Activated CD4-positive, alpha-beta memory T cell treated with anti-CD3 and anti-CD28 coated beads for 36 hours (primary cell): ENCODE measurements at regions of chr4 and their contacts with region 1.

Region 1: DNA sequence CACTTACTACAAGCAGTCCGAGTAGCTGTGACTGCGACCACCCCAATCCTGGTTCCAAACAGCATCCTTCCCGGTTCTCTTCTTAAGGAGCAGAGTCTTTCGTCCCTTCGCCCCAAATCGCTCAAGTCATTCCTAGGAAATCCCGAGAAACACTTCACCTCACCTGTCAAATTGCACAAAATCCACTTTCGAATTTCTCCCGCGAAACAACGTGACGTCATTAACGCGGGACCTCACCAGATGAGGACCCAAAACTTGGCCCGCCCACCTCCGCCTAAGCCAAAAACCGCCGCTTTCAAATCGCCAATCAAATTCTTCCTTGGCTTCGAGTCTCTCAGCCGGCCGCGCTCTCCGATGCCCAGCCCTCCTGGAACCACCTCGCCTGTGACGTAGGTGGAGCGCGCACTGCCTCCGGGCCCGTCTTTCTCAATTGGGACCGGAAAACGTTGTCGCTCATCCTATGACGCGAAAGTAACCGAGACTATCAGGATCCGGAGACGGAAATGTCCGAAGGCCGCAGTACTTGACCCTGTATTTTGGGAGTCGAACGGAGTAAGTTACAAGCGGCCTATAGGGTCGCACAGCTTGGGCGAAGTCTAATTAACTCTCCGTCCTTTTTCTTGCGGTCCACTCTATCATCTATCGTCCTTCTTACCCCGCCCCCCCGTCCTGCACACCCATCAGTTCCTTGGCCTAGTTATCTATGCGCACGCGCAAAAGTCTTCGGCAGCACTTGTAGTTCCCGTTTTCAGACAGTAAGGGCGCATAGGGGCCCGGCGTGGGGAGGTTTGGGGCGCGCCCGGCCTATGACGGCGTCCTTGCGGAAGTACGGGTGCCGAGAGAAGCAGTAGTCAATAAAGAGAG is at the starts of genes LARP7 and ZGRF1:
- DNase-seq: peak; percentile 99
- H3K4me3 Mint-ChIP-seq: no peak within 1 kb of the TSS
- H3K27ac Mint-ChIP-seq: no peak within 1 kb of the TSS
- H3K4me1 Mint-ChIP-seq: peaks cover 33% of the 10 kb centered on the region
- H3K27me3 Mint-ChIP-seq: no peaks in the 10 kb centered on the region
- total RNA-seq, gene LARP7: 40.9 to 41.3 TPM
- total RNA-seq, gene ZGRF1: 32.9 to 36.6 TPM

Region 2: GRCh38 chr4:112145326-112145819 is 491.5 kb before region 1 on chr4 and contains the start of gene FAM241A:
- CTCF ChIA-PET with region 1: no interaction called
- POLR2A ChIA-PET with region 1: no interaction called
- intact Hi-C with region 1: loop called (anchors 1 kb)
- DNase-seq: peak; percentile 92
- H3K4me3 Mint-ChIP-seq: peak within 1 kb of the TSS; percentile 87
- H3K27ac Mint-ChIP-seq: peak within 1 kb of the TSS; percentile 84
- H3K4me1 Mint-ChIP-seq: peaks cover 42% of the 10 kb centered on the region
- H3K27me3 Mint-ChIP-seq: no peaks in the 10 kb centered on the region
- total RNA-seq, gene FAM241A: 3.1 to 3.5 TPM

Region 3: GRCh38 chr4:112270640-112271393 is 366.1 kb before region 1 on chr4:
- CTCF ChIA-PET with region 1: interaction called, 4 read pairs
- POLR2A ChIA-PET with region 1: no interaction called
- intact Hi-C with region 1: loop called (anchors 5 kb)
- DNase-seq: no peak
- H3K4me3 Mint-ChIP-seq: no peak overlapping the region
- H3K27ac Mint-ChIP-seq: peak overlapping the region; percentile 77
- H3K4me1 Mint-ChIP-seq: peaks cover 60% of the 10 kb centered on the region
- H3K27me3 Mint-ChIP-seq: no peaks in the 10 kb centered on the region

Region 4: DNA sequence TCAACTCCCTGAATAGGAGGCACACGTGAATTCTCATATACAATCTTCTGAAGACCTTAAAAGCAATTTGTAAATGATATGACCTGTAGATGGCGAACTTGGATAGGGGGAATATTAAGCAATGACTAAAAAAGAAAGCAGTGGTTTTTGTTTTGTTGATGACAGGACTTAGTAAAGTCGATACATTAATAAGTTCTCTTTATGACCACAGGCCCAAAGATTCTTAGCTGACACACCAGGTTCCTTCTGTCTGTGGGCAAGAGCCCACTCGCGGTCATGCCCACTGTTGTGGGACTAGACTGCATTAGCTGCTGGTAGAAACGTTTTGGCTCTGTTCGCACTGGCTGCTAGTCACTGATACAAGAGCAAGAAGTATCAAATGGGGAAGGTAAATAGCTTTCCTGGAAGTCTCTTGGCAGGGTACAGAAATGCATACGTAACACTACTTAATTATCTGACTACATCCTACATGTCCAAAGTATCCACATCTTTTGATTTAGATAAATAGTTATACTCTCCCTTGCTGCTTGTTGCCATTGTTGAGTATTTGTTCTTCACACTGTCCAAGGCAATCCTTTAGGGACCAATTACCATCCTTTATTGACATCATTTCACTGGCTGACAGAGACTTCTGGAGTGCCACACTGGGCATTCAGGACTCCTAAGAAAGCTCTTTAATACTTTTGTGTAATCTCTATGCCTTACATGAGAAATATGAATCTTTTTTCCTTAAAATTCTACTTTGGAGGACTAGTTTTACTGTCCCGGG is 308.8 kb before region 1 on chr4:
- CTCF ChIA-PET with region 1: interaction called, 6 read pairs
- POLR2A ChIA-PET with region 1: no interaction called
- intact Hi-C with region 1: loop called (anchors 10 kb)
- DNase-seq: peak; percentile 24
- H3K4me3 Mint-ChIP-seq: no peak overlapping the region
- H3K27ac Mint-ChIP-seq: no peak overlapping the region
- H3K4me1 Mint-ChIP-seq: peaks cover 5% of the 10 kb centered on the region
- H3K27me3 Mint-ChIP-seq: no peaks in the 10 kb centered on the region

Region 5: DNA sequence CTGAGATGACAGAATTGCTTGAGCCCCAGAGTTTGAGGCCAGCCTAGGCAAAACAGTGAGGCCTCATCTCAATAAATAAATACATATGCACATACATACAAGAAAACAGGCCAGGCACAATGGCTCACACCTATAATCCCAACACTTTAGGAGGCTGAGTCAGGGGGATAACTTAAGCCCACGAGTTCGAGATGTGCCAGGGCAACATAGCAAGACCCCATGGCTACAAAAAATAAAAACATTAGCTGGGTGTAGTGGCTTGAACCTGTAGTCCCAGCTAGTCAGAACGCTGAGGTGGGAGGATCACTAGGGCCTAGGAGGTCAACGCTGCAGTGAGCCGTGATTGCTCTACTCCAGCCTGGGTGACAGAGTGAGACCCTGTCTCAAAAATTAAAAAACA is 69.4 kb before region 1 on chr4:
- CTCF ChIA-PET with region 1: no interaction called
- POLR2A ChIA-PET with region 1: no interaction called
- intact Hi-C with region 1: no loop called
- DNase-seq: no peak
- H3K4me3 Mint-ChIP-seq: no peak overlapping the region
- H3K27ac Mint-ChIP-seq: no peak overlapping the region
- H3K4me1 Mint-ChIP-seq: no peaks in the 10 kb centered on the region
- H3K27me3 Mint-ChIP-seq: no peaks in the 10 kb centered on the region

Region 6: DNA sequence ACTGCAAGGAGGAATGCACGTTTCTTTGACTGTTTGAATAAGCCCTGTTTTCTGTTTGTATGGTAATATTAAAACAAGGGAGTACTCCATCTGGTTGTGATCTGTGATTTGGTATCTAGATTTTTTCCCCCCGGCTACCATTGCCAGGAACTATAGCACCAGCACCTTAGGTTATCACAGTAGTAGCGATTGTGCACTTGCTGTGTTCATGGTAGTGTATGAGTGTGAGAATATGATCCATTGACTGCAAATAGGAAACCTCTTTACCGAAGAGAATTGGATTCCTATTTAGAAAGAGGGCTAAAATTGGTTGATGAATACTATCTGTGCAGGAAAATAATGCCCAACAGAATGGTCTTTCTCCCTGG is 69.9 kb after region 1 on chr4:
- CTCF ChIA-PET with region 1: no interaction called
- POLR2A ChIA-PET with region 1: no interaction called
- intact Hi-C with region 1: loop called (anchors 2 kb)
- DNase-seq: no peak
- H3K4me3 Mint-ChIP-seq: peak overlapping the region; percentile 81
- H3K27ac Mint-ChIP-seq: no peak overlapping the region
- H3K4me1 Mint-ChIP-seq: peaks cover 21% of the 10 kb centered on the region
- H3K27me3 Mint-ChIP-seq: peaks cover 31% of the 10 kb centered on the region

Region 7: GRCh38 chr4:112765317-112765975 is 128.5 kb after region 1 on chr4:
- CTCF ChIA-PET with region 1: interaction called, 60 read pairs
- POLR2A ChIA-PET with region 1: no interaction called
- intact Hi-C with region 1: loop called (anchors 1 kb)
- DNase-seq: no peak
- H3K4me3 Mint-ChIP-seq: no peak overlapping the region
- H3K27ac Mint-ChIP-seq: no peak overlapping the region
- H3K4me1 Mint-ChIP-seq: no peaks in the 10 kb centered on the region
- H3K27me3 Mint-ChIP-seq: peaks cover 3% of the 10 kb centered on the region

Region 8: DNA sequence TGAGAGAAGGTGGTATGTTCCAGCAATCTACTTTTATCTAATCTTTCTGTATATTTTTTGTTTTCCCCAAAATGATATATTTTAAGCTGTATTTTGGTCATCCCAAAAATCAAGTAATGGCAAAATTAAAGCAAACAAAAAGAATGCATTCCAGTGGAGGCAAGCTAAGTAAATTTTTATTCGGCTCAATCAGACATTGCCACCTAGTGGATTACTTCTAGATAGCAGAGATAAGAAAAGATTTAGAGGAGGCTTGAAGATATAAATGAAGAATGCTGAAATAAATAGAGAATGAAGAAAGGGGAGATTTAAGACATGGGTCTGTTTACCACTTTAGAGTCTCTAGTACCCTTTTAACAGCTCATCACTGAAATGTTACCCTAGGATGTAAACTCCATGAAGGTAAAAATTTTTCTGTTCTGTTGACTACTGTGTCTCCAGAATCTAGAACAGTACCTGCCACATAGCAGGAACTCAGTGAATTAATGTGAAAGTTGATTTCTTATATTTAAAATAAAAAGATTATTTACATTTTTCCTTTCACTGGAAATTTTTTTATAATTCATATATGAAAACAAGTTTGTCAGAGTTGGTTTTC is 301.6 kb after region 1 on chr4:
- CTCF ChIA-PET with region 1: no interaction called
- POLR2A ChIA-PET with region 1: no interaction called
- intact Hi-C with region 1: loop called (anchors 1 kb)
- DNase-seq: no peak
- H3K4me3 Mint-ChIP-seq: no peak overlapping the region
- H3K27ac Mint-ChIP-seq: no peak overlapping the region
- H3K4me1 Mint-ChIP-seq: no peaks in the 10 kb centered on the region
- H3K27me3 Mint-ChIP-seq: peaks cover 7% of the 10 kb centered on the region